ENCODE measurements at regions of chr14 and their contacts with region 1.

Region 1: GRCh38 chr14:103562429-103563225 is at the starts of genes BAG5 and COA8:
- DNase-seq: peak; percentile 76 to 91
- H3K4me3 ChIP-seq: peak within 1 kb of the TSS; percentile 94 to 96
- H3K27ac ChIP-seq: peak within 1 kb of the TSS; percentile 92 to 94
- H3K4me1 ChIP-seq: peaks cover 0 to 79% (median 51%) of the 10 kb centered on the region in 4 donors
- H3K27me3 ChIP-seq: no peaks in the 10 kb centered on the region
- CTCF ChIP-seq: no peak

Region 2: GRCh38 chr14:103356024-103356682 is 206.5 kb before region 1 on chr14:
- intact Hi-C with region 1: no loop called
- DNase-seq: no peak
- H3K4me3 ChIP-seq: no peak overlapping the region
- H3K27ac ChIP-seq: no peak overlapping the region
- H3K4me1 ChIP-seq: no peaks in the 10 kb centered on the region
- H3K27me3 ChIP-seq: peaks cover 0 to 12% of the 10 kb centered on the region in 2 donors
- CTCF ChIP-seq: no peak

Region 3: DNA sequence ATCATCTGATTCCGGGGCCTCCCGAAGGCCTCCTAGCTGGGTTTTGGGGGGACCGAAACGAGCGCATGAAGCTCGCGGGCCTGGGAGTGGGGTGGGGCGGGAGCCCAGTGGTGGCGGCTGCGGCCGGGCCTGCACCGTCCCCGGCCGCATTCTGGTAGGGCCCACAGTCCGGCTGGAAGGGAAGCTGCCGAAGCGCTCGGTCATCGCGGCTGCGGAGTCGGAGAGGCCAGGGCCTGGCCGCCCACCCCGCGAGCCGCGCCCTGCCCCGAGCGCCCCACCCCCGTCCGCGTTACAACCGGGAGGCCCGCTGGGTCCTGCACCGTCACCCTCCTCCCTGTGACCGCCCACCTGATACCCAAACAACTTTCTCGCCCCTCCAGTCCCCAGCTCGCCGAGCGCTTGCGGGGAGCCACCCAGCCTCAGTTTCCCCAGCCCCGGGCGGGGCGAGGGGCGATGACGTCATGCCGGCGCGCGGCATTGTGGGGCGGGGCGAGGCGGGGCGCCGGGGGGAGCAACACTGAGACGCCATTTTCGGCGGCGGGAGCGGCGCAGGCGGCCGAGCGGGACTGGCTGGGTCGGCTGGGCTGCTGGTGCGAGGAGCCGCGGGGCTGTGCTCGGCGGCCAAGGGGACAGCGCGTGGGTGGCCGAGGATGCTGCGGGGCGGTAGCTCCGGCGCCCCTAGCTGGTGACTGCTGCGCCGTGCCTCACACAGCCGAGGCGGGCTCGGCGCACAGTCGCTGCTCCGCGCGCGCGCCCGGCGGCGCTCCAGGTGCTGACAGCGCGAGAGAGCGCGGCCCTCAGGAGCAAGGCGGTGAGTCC is 66.3 kb after region 1 on chr14 and contains the start of gene KLC1:
- intact Hi-C with region 1: loop called (anchors 5 kb)
- DNase-seq: peak; percentile 77 to 92
- H3K4me3 ChIP-seq: peak within 1 kb of the TSS; percentile 80 to 96
- H3K27ac ChIP-seq: peak within 1 kb of the TSS; percentile 96 to 99
- H3K4me1 ChIP-seq: peaks cover 4 to 72% (median 60%) of the 10 kb centered on the region in 4 donors
- H3K27me3 ChIP-seq: no peaks in the 10 kb centered on the region
- CTCF ChIP-seq: no peak

Region 4: DNA sequence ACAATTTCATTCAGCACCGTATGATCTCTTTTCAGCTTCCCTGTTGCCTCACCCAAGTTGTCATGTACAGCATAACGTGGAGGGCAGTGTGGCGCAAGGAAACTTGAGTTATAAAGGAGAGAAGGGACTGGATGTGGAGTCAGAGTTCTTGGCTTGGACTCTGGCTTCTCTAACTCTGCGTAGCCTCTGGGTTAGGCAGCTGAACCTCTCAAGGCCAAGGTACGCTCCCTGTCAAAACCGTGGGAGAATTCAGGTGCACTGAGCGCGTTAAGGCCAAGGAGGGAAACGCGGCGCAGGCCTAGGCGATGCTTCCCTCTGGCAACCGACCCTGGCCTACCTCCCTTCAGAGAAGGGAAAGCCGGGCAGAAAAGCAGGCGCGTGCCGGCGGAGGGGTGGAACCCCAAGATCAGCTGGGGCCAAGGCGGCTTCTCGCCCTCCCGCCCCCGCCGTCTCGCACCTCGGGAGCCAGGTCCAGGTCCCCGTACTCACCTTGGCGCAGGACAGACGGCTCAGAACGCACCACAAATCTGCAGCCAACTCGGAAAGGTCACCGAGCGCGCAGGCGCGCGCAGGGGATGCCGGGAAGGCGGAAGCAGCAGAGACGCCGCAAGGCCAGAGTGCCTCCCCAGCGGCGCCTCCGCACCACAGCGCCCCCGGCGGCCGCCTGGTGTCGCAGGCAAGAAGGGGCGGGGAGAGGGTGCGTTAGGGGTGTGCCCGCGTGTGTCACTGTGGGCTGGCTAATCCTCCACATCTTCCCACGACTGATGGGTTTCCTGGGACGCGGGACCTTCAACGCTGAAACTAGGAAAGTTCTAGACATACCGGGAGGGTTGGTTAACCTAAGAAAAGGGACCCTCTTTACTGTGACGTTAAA is 358.6 kb after region 1 on chr14:
- intact Hi-C with region 1: loop called (anchors 5 kb)
- DNase-seq: peak; percentile 86 to 94
- H3K4me3 ChIP-seq: peak overlapping the region; percentile 75 to 82
- H3K27ac ChIP-seq: peak overlapping the region; percentile 72 to 78
- H3K4me1 ChIP-seq: peaks cover 4 to 35% (median 20%) of the 10 kb centered on the region in 4 donors
- H3K27me3 ChIP-seq: peaks cover 0 to 16% of the 10 kb centered on the region in 2 donors
- CTCF ChIP-seq: peak; percentile 94 to 99

Measured in tibial artery (tissue), 4 donors.